GM13976 (cell line): ENCODE measurements at regions of chr3 and their contacts with region 1.

Region 1: DNA sequence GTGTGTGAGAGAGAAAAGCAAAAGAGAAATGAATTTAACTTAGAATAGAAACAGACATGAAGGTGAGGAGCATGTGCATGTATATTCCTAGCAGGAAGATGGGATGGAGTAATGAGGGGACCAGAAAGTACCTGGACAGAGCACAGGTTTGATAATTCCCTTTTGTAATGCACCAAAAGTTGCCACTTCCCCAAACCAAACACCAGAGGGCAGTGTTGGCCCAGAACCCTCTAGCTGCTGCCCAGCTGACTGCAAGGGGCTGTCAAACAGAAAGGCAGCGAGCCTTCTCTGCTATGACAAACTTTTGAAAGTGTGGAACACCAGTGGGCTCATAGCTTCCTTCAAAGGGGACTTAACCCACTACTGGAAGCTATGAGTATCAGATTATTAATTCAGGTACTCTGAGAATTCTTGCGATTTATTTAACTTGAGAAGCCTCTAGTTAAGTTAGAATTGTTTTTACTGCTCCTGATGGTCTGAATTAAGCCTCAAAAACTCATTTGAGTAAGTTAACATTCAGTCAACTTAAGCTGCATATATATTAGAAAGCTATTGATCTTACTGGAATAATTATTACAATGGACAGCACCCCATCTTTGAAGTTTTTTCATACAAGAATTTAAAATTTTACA is 234.9 kb downstream of the NEK10 start:
- DNase-seq: peak; percentile 42
- CTCF ChIP-seq: peak; percentile 93

Region 2: DNA sequence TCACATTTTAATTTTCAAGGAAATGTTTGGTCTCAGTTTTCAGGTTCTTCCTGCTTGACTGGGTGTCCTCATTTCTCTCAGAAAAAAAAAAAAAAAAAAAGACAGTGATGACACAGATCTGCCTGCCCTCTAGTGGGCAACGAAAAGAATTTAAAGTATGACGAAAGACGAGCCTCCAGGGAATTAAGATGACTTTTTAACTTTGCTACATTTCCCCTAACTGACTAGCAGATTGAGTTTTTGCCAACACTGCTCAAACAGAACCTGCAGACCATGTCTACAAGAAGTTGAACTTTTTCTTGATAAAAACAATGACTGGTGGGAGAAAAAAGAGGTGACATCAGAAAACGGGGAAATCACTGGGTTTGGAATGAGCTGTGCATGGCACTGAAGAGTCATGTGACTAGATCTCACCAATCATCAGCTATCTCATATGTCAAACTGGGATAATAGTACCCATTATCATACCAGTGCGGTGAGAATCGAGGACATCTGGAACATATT is 547.0 kb after region 1 on chr3:
- in situ Hi-C with region 1: loop called (anchors 25 kb)
- DNase-seq: peak; percentile 68
- CTCF ChIP-seq: peak; percentile 24